ENCODE measurements at regions of chr6 and their contacts with region 1.

Region 1: GRCh38 chr6:73653571-73654424 is at the start of gene SLC17A5:
- DNase-seq: peak; percentile 94
- ATAC-seq: peak; percentile 91
- H3K4me3 Mint-ChIP-seq: peak within 1 kb of the TSS; percentile 95
- H3K27ac Mint-ChIP-seq: peak within 1 kb of the TSS; percentile 96
- H3K4me1 Mint-ChIP-seq: peaks cover 37% of the 10 kb centered on the region
- H3K27me3 Mint-ChIP-seq: no peaks in the 10 kb centered on the region
- total RNA-seq, gene SLC17A5: 3.9 to 5.6 TPM

Region 2: GRCh38 chr6:73515204-73515655 is 138.6 kb before region 1 on chr6:
- CTCF ChIA-PET with region 1: interaction called, 42 read pairs
- DNase-seq: peak; percentile 43
- ATAC-seq: peak; percentile 10
- H3K4me3 Mint-ChIP-seq: no peak overlapping the region
- H3K27ac Mint-ChIP-seq: peak overlapping the region; percentile 81
- H3K4me1 Mint-ChIP-seq: peaks cover 55% of the 10 kb centered on the region
- H3K27me3 Mint-ChIP-seq: no peaks in the 10 kb centered on the region

Region 3: GRCh38 chr6:73520688-73521350 is 133.0 kb before region 1 on chr6 and contains the start of gene EEF1A1:
- CTCF ChIA-PET with region 1: interaction called, 42 read pairs
- DNase-seq: peak; percentile 100
- ATAC-seq: peak; percentile 69
- H3K4me3 Mint-ChIP-seq: peak within 1 kb of the TSS; percentile 96
- H3K27ac Mint-ChIP-seq: peak within 1 kb of the TSS; percentile 99
- H3K4me1 Mint-ChIP-seq: peaks cover 47% of the 10 kb centered on the region
- H3K27me3 Mint-ChIP-seq: no peaks in the 10 kb centered on the region
- total RNA-seq, gene EEF1A1: 5,026 to 6,984 TPM

Region 4: GRCh38 chr6:73585566-73586415 is 68.0 kb before region 1 on chr6:
- CTCF ChIA-PET with region 1: interaction called, 11 read pairs
- DNase-seq: peak; percentile 67
- ATAC-seq: peak; percentile 77
- H3K4me3 Mint-ChIP-seq: peak overlapping the region; percentile 74
- H3K27ac Mint-ChIP-seq: peak overlapping the region; percentile 99
- H3K4me1 Mint-ChIP-seq: peaks cover 28% of the 10 kb centered on the region
- H3K27me3 Mint-ChIP-seq: no peaks in the 10 kb centered on the region

Region 5: GRCh38 chr6:73610444-73611275 is 43.1 kb before region 1 on chr6:
- CTCF ChIA-PET with region 1: interaction called, 14 read pairs
- DNase-seq: no peak
- ATAC-seq: peak; percentile 49
- H3K4me3 Mint-ChIP-seq: no peak overlapping the region
- H3K27ac Mint-ChIP-seq: no peak overlapping the region
- H3K4me1 Mint-ChIP-seq: peaks cover 4% of the 10 kb centered on the region
- H3K27me3 Mint-ChIP-seq: no peaks in the 10 kb centered on the region

Measured in activated CD8-positive, alpha-beta memory T cell treated with anti-CD3 and anti-CD28 coated beads, Interleukin-2, amount 10 ng/mL, durations not matched to agents 7 days and 5 days (primary cell).